Mammary epithelial cell (primary cell): ENCODE measurements at regions of chr1 and their contacts with region 1.

Region 1: GRCh38 chr1:1583347-1584010 is 8.8 kb upstream of the SSU72 start:
- DNase-seq: no peak
- H3K4me3 ChIP-seq: no peak overlapping the region
- H3K27ac ChIP-seq: no peak overlapping the region
- H3K4me1 ChIP-seq: no peaks in the 10 kb centered on the region
- H3K27me3 ChIP-seq: no peaks in the 10 kb centered on the region
- CTCF ChIP-seq: no peak

Region 2: GRCh38 chr1:1548591-1548990 is 34.9 kb before region 1 on chr1:
- CTCF ChIA-PET with region 1: no interaction called
- dilution Hi-C with region 1: loop called (anchors 5 kb)
- in situ Hi-C with region 1: no loop called
- intact Hi-C with region 1: no loop called
- DNase-seq: no peak
- H3K4me3 ChIP-seq: no peak overlapping the region
- H3K27ac ChIP-seq: no peak overlapping the region
- H3K4me1 ChIP-seq: peaks cover 3% of the 10 kb centered on the region
- H3K27me3 ChIP-seq: no peaks in the 10 kb centered on the region
- CTCF ChIP-seq: no peak

Region 3: DNA sequence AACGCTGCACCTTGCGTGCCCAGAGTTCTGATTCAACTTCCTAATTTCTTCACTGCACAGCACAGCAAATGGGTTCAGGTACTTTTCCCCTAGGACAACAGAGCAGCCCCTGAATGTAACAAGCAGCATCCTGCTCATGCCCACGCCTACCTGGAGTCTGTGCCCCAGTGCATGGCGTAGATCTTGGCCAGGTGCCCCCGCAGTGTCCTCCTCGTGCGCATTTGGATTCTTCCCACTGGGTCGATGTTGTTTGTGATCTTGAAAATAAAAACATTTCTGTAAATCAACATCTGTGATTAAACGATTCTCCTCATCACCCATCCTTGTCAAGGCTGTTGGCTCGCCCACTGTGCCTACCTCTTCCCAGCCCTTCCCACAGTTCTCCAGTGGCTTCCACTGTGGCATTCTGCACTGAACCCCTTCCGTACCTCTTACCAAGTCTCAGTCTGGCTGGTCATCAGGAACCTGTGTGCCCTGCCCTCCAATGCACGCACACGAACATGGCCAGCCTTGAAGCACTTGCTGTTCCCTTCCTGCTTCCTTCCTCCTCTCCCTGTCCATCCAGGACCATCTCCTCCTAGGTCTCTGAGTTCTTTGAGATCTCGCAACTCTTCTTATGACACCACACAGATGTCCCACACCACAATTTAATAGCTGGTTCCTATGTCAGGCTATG is 232.3 kb after region 1 on chr1:
- CTCF ChIA-PET with region 1: no interaction called
- dilution Hi-C with region 1: no loop called
- in situ Hi-C with region 1: no loop called
- intact Hi-C with region 1: no loop called
- DNase-seq: no peak
- H3K4me3 ChIP-seq: no peak overlapping the region
- H3K27ac ChIP-seq: no peak overlapping the region
- H3K4me1 ChIP-seq: no peaks in the 10 kb centered on the region
- H3K27me3 ChIP-seq: no peaks in the 10 kb centered on the region
- CTCF ChIP-seq: no peak